Astrocyte of the cerebellum (primary cell): ENCODE measurements at regions of chr5 and their contacts with region 1.

Region 1: GRCh38 chr5:139648205-139649081 is at the start of gene CXXC5:
- DNase-seq: peak; percentile 62
- H3K4me3 ChIP-seq: peak within 1 kb of the TSS; percentile 90
- CTCF ChIP-seq: no peak

Region 2: DNA sequence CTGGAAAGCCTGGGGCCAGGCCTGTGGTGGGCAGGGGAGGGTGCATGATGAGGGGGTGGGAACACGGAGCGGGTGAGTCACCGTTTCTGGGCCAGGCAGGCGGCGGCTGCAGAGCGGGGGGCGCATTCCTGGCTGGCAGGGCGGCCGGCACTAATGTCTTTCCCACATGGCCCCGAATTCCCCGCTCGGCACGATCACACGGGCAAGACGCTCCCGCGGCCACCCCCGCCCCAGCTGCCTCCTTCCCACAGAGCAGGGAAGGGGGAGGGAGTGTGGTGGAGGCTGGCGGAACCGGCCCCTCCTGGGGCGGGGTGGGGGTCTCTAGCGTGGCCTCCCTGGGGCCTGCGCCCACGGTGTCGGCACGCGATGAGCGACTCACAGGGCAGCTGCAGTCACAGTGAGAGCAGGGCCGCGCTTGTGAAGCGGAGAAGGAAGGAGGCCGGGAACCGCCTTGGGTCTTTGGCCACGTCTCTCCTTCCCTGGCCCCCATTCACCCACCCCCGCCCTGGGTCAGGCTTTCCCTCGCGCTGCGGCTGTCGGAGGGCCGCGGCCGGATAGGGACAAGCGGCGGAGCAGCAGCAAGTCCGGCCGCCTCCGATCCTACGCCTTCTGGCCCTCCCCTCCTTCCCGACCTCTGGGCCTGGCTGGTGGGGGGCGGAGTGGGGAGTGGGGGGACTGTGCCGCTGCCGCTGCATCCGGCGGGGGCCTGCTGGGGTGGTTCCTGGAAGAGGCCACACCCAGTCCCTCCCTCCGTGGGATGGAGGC is 48.6 kb after region 1 on chr5:
- in situ Hi-C with region 1: loop called (anchors 10 kb)
- DNase-seq: peak; percentile 90
- H3K4me3 ChIP-seq: peak overlapping the region; percentile 24
- CTCF ChIP-seq: no peak

Region 3: GRCh38 chr5:139711067-139711905 is 62.8 kb after region 1 on chr5:
- in situ Hi-C with region 1: loop called (anchors 5 kb)
- DNase-seq: no peak
- H3K4me3 ChIP-seq: peak overlapping the region; percentile 36
- CTCF ChIP-seq: no peak

Region 4: GRCh38 chr5:139745800-139746690 is 97.6 kb after region 1 on chr5:
- in situ Hi-C with region 1: loop called (anchors 5 kb)
- DNase-seq: peak; percentile 65
- H3K4me3 ChIP-seq: no peak overlapping the region
- CTCF ChIP-seq: no peak